ENCODE measurements at regions of chr5 and their contacts with region 1.

Region 1: DNA sequence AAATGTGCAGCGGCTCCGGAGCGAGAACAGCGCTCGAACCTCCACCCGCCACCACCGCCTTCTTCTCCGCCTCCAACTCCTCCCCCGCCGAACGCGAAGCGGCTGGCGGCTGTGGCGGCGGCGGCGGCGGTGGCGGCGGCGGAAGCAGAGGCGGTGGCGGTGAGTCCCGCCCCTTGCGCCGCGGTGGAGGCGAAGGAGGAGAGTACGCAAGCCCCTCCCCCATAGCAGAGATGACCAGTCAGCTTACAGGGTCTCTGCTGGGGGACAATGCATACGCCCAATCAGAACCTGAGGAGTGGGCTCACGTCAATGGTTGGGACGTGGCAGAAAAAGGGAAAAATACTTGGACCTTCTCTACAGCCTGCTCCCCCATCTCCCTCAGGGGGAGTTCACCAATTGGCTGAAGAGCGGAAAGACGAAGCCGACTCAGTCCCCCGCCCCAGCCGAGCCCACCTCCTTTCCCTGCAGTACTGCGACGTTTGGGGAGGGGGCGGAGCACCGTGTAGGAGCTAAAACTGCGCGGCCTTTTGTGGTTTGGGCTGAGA is at the start of gene PJA2:
- DNase-seq: peak; percentile 99 to 100 (median 99)
- ATAC-seq: peak; percentile 97 to 98
- H3K4me3 ChIP-seq: peak within 1 kb of the TSS; percentile 69
- H3K27ac ChIP-seq: peak within 1 kb of the TSS; percentile 100
- H3K4me1 ChIP-seq: no peaks in the 10 kb centered on the region
- H3K27me3 ChIP-seq: no peaks in the 10 kb centered on the region
- total RNA-seq, gene PJA2: 96.9 to 122 (median 98.0) TPM

Region 2: GRCh38 chr5:109291090-109291489 is 118.8 kb before region 1 on chr5:
- intact Hi-C with region 1: no loop called
- DNase-seq: no peak
- ATAC-seq: no peak
- H3K4me3 ChIP-seq: no peak overlapping the region
- H3K27ac ChIP-seq: no peak overlapping the region
- H3K4me1 ChIP-seq: no peaks in the 10 kb centered on the region
- H3K27me3 ChIP-seq: no peaks in the 10 kb centered on the region

Region 3: DNA sequence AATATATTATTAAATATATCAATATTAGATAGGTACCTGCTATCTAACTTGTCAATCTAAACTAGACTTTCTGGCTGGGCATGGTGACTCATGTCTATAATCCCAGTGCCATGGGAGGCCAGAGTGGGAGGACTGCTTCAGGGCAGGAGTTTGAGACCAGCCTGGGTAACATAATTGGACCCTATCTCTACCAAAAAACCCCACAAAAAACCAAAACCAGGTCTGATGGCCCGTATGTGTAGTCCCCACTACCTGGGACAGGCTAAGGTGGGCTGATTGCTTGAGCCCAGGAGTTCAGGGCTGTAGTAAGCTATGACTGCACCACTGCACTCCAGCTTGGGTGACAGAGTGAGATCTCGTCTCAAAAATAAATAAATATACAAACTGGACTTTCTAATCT is 55.2 kb before region 1 on chr5:
- intact Hi-C with region 1: loop called in 1 of 4 experiments (anchors 10 kb)
- DNase-seq: no peak
- ATAC-seq: peak; percentile 43
- H3K4me3 ChIP-seq: no peak overlapping the region
- H3K27ac ChIP-seq: no peak overlapping the region
- H3K4me1 ChIP-seq: no peaks in the 10 kb centered on the region
- H3K27me3 ChIP-seq: no peaks in the 10 kb centered on the region

Measured in right cardiac atrium (tissue), 5 donors.